B cell (primary cell): ENCODE measurements at regions of chr7 and their contacts with region 1.

Region 1: DNA sequence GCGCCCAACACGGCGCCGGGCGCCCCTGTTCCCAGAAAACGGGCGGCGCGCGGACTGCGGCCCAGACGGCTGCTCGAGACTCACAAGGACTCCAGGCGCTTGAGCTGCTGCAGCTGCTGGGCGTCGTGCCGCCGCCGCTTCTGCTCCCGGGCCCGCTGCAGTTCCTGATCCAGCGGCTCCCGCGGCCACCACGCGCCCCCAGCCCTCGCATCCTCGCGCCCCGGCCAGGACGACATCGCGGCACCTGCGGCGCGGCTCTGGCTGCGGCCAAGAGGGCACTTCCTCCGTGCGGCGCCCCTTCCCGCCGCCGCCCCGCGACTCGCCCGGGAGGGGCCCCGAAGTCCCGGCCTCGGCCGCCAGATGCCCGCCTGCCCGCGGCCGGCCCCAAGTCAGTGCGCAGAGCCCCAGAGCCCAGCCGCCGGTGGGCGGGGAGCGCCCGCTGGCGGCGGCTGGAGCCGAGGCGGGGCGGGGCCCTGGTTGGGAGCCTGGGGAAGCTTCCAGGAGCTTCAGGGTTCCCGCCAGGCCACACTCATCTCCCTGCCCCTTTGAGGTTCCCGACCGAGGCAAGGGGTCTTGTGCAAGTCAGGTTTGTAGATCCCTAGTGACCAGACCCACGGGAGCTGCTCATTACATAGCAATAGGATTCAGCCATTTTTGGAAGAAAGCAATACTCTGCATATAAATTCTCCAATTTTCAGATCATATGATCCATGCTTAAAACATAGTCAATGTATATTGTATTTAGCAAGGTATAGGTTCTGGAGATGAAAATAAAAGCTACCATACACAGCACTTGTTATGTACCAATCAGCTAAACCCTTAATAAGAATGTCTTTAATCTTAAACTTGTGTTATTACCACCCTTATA is 14.2 kb upstream of the FKBP9 start:
- DNase-seq: peak; percentile 82
- ATAC-seq: peak; percentile 81
- H3K4me3 ChIP-seq: peak overlapping the region; percentile 60 to 78 (median 70)
- H3K4me3 Mint-ChIP-seq: peak overlapping the region; percentile 99
- H3K27ac ChIP-seq: peak overlapping the region; percentile 41 to 65
- H3K27ac Mint-ChIP-seq: peak overlapping the region; percentile 73
- H3K4me1 ChIP-seq: peaks cover 17 to 21% of the 10 kb centered on the region in 2 donors
- H3K4me1 Mint-ChIP-seq: peaks cover 23% of the 10 kb centered on the region
- H3K27me3 ChIP-seq: no peaks in the 10 kb centered on the region
- H3K27me3 Mint-ChIP-seq: no peaks in the 10 kb centered on the region
- CTCF ChIP-seq: peak; percentile 70

Region 2: DNA sequence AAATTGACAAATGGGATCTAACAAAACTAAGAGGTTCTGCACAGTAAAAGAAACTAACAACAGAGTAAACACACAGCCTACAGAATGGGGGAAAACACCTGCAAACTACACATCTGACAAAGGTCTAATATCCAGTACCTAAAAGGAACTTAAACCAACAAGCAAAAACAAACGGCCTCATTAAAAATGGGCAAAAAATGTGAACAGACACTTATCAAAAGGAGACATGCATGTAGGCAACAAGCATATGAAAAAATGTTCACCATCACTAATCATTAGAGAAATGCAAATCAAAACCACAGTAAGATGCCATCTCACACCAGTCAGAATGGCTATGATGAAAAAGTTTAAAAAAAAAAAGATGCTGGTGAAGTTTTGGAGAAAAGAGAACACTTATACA is 248.8 kb before region 1 on chr7:
- CTCF ChIA-PET with region 1: interaction called, 9 read pairs
- POLR2A ChIA-PET with region 1: no interaction called
- intact Hi-C with region 1: loop called (anchors 5 kb)
- DNase-seq: no peak
- ATAC-seq: no peak
- H3K4me3 ChIP-seq: no peak overlapping the region
- H3K4me3 Mint-ChIP-seq: no peak overlapping the region
- H3K27ac ChIP-seq: no peak overlapping the region
- H3K27ac Mint-ChIP-seq: no peak overlapping the region
- H3K4me1 ChIP-seq: peaks cover 10 to 12% of the 10 kb centered on the region in 2 donors
- H3K4me1 Mint-ChIP-seq: peaks cover 16% of the 10 kb centered on the region
- H3K27me3 ChIP-seq: no peaks in the 10 kb centered on the region
- H3K27me3 Mint-ChIP-seq: no peaks in the 10 kb centered on the region
- CTCF ChIP-seq: no peak

Region 3: DNA sequence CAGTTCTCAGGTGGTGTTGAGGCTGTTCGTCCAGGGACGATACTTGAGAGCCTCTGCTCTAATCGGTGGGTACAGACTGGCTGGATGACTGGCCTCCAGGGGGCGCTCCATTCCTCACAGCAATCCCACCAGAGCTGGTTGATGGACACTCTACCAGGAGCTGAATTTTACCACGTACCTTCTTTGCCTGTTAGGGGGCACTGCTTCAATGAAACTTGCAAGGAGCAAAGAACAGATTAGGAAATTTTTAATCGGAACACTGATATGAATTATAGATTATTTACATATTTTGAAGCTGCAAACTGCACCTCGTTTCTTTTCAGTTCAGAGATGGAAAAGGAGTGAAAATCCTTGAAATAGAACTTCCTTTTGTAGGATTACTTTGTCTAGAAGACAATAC is 96.3 kb before region 1 on chr7:
- CTCF ChIA-PET with region 1: interaction called, 122 read pairs
- POLR2A ChIA-PET with region 1: no interaction called
- intact Hi-C with region 1: loop called (anchors 1 kb)
- DNase-seq: peak; percentile 91
- ATAC-seq: peak; percentile 100
- H3K4me3 ChIP-seq: no peak overlapping the region
- H3K4me3 Mint-ChIP-seq: no peak overlapping the region
- H3K27ac ChIP-seq: no peak overlapping the region
- H3K27ac Mint-ChIP-seq: no peak overlapping the region
- H3K4me1 ChIP-seq: peaks cover 6 to 7% of the 10 kb centered on the region in 2 donors
- H3K4me1 Mint-ChIP-seq: peaks cover 7% of the 10 kb centered on the region
- H3K27me3 ChIP-seq: peaks cover 0 to 7% (median 1%) of the 10 kb centered on the region in 4 experiments
- H3K27me3 Mint-ChIP-seq: peaks cover 18% of the 10 kb centered on the region
- CTCF ChIP-seq: peak; percentile 89

Region 4: GRCh38 chr7:32928785-32929298 is 14.2 kb before region 1 on chr7:
- CTCF ChIA-PET with region 1: interaction called, 13 read pairs
- POLR2A ChIA-PET with region 1: no interaction called
- intact Hi-C with region 1: loop called (anchors 2 kb)
- DNase-seq: peak; percentile 48
- ATAC-seq: peak; percentile 62
- H3K4me3 ChIP-seq: peak overlapping the region in 1 of 5 experiments; percentile 29
- H3K4me3 Mint-ChIP-seq: peak overlapping the region; percentile 30
- H3K27ac ChIP-seq: peak overlapping the region; percentile 35 to 67
- H3K27ac Mint-ChIP-seq: peak overlapping the region; percentile 70
- H3K4me1 ChIP-seq: peaks cover 17 to 21% of the 10 kb centered on the region in 2 donors
- H3K4me1 Mint-ChIP-seq: peaks cover 26% of the 10 kb centered on the region
- H3K27me3 ChIP-seq: no peaks in the 10 kb centered on the region
- H3K27me3 Mint-ChIP-seq: no peaks in the 10 kb centered on the region
- CTCF ChIP-seq: no peak

Region 5: GRCh38 chr7:33040803-33041516 is 97.9 kb after region 1 on chr7:
- CTCF ChIA-PET with region 1: interaction called, 4 read pairs
- POLR2A ChIA-PET with region 1: no interaction called
- intact Hi-C with region 1: loop called (anchors 5 kb)
- DNase-seq: peak; percentile 85
- ATAC-seq: peak; percentile 96
- H3K4me3 ChIP-seq: peak overlapping the region; percentile 26 to 79 (median 44)
- H3K4me3 Mint-ChIP-seq: peak overlapping the region; percentile 84
- H3K27ac ChIP-seq: peak overlapping the region; percentile 2 to 73
- H3K27ac Mint-ChIP-seq: peak overlapping the region; percentile 86
- H3K4me1 ChIP-seq: peaks cover 21 to 40% of the 10 kb centered on the region in 2 donors
- H3K4me1 Mint-ChIP-seq: peaks cover 67% of the 10 kb centered on the region
- H3K27me3 ChIP-seq: no peaks in the 10 kb centered on the region
- H3K27me3 Mint-ChIP-seq: no peaks in the 10 kb centered on the region
- CTCF ChIP-seq: no peak

Region 6: GRCh38 chr7:33062782-33063443 is 119.9 kb after region 1 on chr7:
- CTCF ChIA-PET with region 1: no interaction called
- POLR2A ChIA-PET with region 1: no interaction called
- intact Hi-C with region 1: loop called (anchors 2 kb)
- DNase-seq: peak; percentile 98
- ATAC-seq: peak; percentile 93
- H3K4me3 ChIP-seq: peak overlapping the region; percentile 19 to 92 (median 75)
- H3K4me3 Mint-ChIP-seq: peak overlapping the region; percentile 91
- H3K27ac ChIP-seq: peak overlapping the region; percentile 68 to 79
- H3K27ac Mint-ChIP-seq: peak overlapping the region; percentile 94
- H3K4me1 ChIP-seq: peaks cover 30% of the 10 kb centered on the region in 2 donors
- H3K4me1 Mint-ChIP-seq: peaks cover 39% of the 10 kb centered on the region
- H3K27me3 ChIP-seq: no peaks in the 10 kb centered on the region
- H3K27me3 Mint-ChIP-seq: no peaks in the 10 kb centered on the region
- CTCF ChIP-seq: no peak

Region 7: GRCh38 chr7:33091111-33091531 is 148.1 kb after region 1 on chr7:
- CTCF ChIA-PET with region 1: no interaction called
- POLR2A ChIA-PET with region 1: no interaction called
- intact Hi-C with region 1: no loop called
- DNase-seq: no peak
- ATAC-seq: no peak
- H3K4me3 ChIP-seq: no peak overlapping the region
- H3K4me3 Mint-ChIP-seq: no peak overlapping the region
- H3K27ac ChIP-seq: no peak overlapping the region
- H3K27ac Mint-ChIP-seq: no peak overlapping the region
- H3K4me1 ChIP-seq: peaks cover 5 to 8% of the 10 kb centered on the region in 2 donors
- H3K4me1 Mint-ChIP-seq: peaks cover 13% of the 10 kb centered on the region
- H3K27me3 ChIP-seq: no peaks in the 10 kb centered on the region
- H3K27me3 Mint-ChIP-seq: no peaks in the 10 kb centered on the region
- CTCF ChIP-seq: no peak

Region 8: GRCh38 chr7:33639552-33640197 is 696.7 kb after region 1 on chr7:
- CTCF ChIA-PET with region 1: no interaction called
- POLR2A ChIA-PET with region 1: no interaction called
- intact Hi-C with region 1: no loop called
- DNase-seq: no peak
- ATAC-seq: no peak
- H3K4me3 ChIP-seq: no peak overlapping the region
- H3K4me3 Mint-ChIP-seq: no peak overlapping the region
- H3K27ac ChIP-seq: no peak overlapping the region
- H3K27ac Mint-ChIP-seq: no peak overlapping the region
- H3K4me1 ChIP-seq: no peaks in the 10 kb centered on the region
- H3K4me1 Mint-ChIP-seq: no peaks in the 10 kb centered on the region
- H3K27me3 ChIP-seq: no peaks in the 10 kb centered on the region
- H3K27me3 Mint-ChIP-seq: no peaks in the 10 kb centered on the region
- CTCF ChIP-seq: no peak